WTC11 (cell line): ENCODE measurements at regions of chr11 and their contacts with region 1.

Region 1: GRCh38 chr11:124758317-124759203 is 3.5 kb downstream of the ESAM start:
- DNase-seq: peak; percentile 95
- ATAC-seq: peak; percentile 75
- H3K4me3 Mint-ChIP-seq: peak overlapping the region; percentile 84
- H3K27ac Mint-ChIP-seq: no peak overlapping the region
- H3K4me1 Mint-ChIP-seq: peaks cover 57% of the 10 kb centered on the region
- H3K27me3 Mint-ChIP-seq: peaks cover 95% of the 10 kb centered on the region
- CTCF ChIP-seq: peak; percentile 44; the same call in 1 of the 2 replicates

Region 2: DNA sequence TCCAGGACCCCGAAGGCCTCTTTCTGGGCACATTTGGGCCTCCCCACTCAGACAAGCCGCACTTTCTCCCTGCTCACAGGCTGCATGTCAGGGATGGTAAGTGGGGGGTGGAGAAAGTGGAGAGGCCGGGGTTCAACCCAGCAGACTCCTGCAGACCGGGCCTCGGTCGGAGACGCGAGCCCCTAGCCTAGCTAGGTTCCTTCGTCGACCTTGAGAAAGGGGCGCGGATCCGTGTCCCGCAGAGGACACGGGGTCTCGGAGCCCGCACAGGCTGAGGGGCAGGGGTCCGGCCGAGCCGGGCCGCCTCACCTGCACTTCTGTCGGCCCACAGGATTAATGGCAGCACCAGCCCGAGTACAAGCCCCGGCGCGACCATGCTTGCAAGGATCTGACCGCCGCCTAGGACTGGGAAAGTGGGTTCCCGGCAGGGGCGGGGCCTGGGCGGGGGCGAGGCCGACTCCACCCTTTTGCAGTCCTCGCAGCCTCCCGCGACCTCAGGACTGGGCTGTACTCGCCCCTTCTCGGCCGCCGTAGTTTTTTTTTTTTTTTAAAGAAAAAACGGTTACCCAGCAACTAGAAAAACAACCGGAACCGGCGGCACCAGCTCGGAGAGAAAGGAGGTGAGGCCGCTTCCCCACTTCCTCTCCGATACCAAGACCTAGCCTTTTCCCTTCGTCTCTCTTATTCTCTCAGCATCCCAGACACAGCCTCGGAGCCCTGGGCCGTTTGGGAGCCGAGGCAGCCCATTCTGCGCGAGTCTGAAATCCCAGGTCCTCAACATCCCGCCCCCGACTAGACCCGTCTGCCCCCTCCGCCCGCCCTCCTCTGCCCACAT is 85.0 kb before region 1 on chr11 and contains the starts of genes SIAE and SPA17:
- CTCF ChIA-PET with region 1: interaction called, 61 read pairs
- POLR2A ChIA-PET with region 1: interaction called, 4 read pairs
- DNase-seq: peak; percentile 96
- ATAC-seq: peak; percentile 97
- H3K4me3 Mint-ChIP-seq: peak within 1 kb of the TSS; percentile 90
- H3K27ac Mint-ChIP-seq: peak within 1 kb of the TSS; percentile 86
- H3K4me1 Mint-ChIP-seq: peaks cover 11% of the 10 kb centered on the region
- H3K27me3 Mint-ChIP-seq: peaks cover 23% of the 10 kb centered on the region
- CTCF ChIP-seq: no peak
- total RNA-seq, gene SIAE: 4.4 to 4.9 TPM (median 4.8 TPM) in 3 replicates
- total RNA-seq, gene SPA17: 3.5 to 3.8 TPM (median 3.5 TPM) in 3 replicates

Region 3: DNA sequence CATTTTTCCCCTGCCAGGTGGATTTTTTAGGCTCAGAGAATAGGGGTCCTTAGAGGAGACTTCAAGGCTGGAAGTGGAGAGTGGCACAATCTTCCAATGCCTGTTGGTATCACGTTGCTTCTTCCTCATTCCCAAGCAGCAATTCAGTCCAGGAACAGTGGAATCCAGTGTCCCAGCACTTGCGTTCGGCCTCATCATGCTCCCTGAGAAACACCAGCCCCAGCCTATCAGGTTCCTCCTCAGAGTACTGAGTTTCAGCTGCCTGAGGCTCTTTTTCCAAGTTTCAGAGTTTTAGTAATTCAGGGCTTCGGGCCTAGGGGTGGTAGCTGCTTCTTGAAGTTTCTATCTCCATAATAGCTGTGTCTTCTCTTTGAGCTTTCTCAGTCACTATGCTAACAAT is 50.7 kb before region 1 on chr11:
- CTCF ChIA-PET with region 1: no interaction called
- POLR2A ChIA-PET with region 1: no interaction called
- DNase-seq: no peak
- ATAC-seq: no peak
- H3K4me3 Mint-ChIP-seq: no peak overlapping the region
- H3K27ac Mint-ChIP-seq: no peak overlapping the region
- H3K4me1 Mint-ChIP-seq: no peaks in the 10 kb centered on the region
- H3K27me3 Mint-ChIP-seq: peaks cover 16% of the 10 kb centered on the region
- CTCF ChIP-seq: no peak

Region 4: GRCh38 chr11:124746621-124747243 is 11.8 kb before region 1 on chr11:
- CTCF ChIA-PET with region 1: interaction called, 70 read pairs
- POLR2A ChIA-PET with region 1: interaction called, 4 read pairs
- DNase-seq: peak; percentile 90
- ATAC-seq: peak; percentile 83
- H3K4me3 Mint-ChIP-seq: peak overlapping the region; percentile 89
- H3K27ac Mint-ChIP-seq: no peak overlapping the region
- H3K4me1 Mint-ChIP-seq: peaks cover 38% of the 10 kb centered on the region
- H3K27me3 Mint-ChIP-seq: peaks cover 100% of the 10 kb centered on the region
- CTCF ChIP-seq: peak; percentile 34; the same call in 1 of the 2 replicates

Region 5: GRCh38 chr11:124788521-124788920 is 30.0 kb after region 1 on chr11:
- CTCF ChIA-PET with region 1: interaction called, 50 read pairs
- POLR2A ChIA-PET with region 1: no interaction called
- DNase-seq: no peak
- ATAC-seq: no peak
- H3K4me3 Mint-ChIP-seq: no peak overlapping the region
- H3K27ac Mint-ChIP-seq: no peak overlapping the region
- H3K4me1 Mint-ChIP-seq: peaks cover 42% of the 10 kb centered on the region
- H3K27me3 Mint-ChIP-seq: no peaks in the 10 kb centered on the region
- CTCF ChIP-seq: no peak

Region 6: GRCh38 chr11:124800226-124800929 is 41.8 kb after region 1 on chr11 and contains the start of gene MSANTD2:
- CTCF ChIA-PET with region 1: interaction called, 50 read pairs
- POLR2A ChIA-PET with region 1: interaction called, 6 read pairs
- DNase-seq: peak; percentile 75
- ATAC-seq: peak; percentile 84
- H3K4me3 Mint-ChIP-seq: peak within 1 kb of the TSS; percentile 88
- H3K27ac Mint-ChIP-seq: peak within 1 kb of the TSS; percentile 84
- H3K4me1 Mint-ChIP-seq: peaks cover 33% of the 10 kb centered on the region
- H3K27me3 Mint-ChIP-seq: no peaks in the 10 kb centered on the region; the same call in 1 of the 2 replicates
- CTCF ChIP-seq: no peak
- total RNA-seq, gene MSANTD2: 16.5 to 17.5 TPM (median 16.8 TPM) in 3 replicates

Region 7: DNA sequence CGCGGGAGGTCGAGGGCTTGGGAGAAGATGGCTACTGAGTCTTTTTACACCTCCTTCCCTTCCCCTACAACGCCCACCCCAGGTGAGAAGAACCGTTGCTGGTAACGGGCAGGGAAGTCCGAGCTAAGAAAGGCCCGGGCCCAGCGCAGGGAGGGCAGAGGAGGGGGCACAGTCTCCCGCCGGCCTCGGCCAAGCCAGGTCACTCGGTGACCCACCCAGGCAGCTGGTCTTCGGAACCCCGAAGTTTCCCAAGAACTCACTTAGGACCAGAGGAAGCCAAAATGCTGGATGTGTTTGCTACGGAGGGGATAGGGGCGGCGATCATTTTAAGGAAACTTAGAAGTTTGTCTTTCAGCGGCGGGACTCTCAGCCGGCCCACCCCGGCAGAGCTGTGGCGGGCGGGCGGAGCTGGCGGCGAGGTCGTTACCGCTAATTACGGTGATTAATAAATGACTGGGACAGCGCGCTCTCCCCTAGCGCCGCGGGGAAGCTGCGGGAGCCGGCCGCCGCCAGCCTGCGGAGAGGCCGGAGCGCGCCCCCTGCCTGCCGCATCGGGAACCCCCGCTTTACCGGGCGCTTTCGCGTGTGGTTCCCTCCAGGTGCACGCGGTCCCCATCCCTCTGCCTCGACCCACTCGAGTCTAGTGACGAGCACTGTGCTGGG is 107.5 kb after region 1 on chr11:
- CTCF ChIA-PET with region 1: interaction called, 18 read pairs
- POLR2A ChIA-PET with region 1: no interaction called
- DNase-seq: peak; percentile 76
- ATAC-seq: peak; percentile 10; the same call in 1 of the 2 replicates
- H3K4me3 Mint-ChIP-seq: peak overlapping the region; percentile 60
- H3K27ac Mint-ChIP-seq: no peak overlapping the region
- H3K4me1 Mint-ChIP-seq: peaks cover 40% of the 10 kb centered on the region
- H3K27me3 Mint-ChIP-seq: peaks cover 100% of the 10 kb centered on the region
- CTCF ChIP-seq: peak; percentile 87